ENCODE measurements at regions of chr20 and their contacts with region 1.

Region 1: GRCh38 chr20:47610247-47610944 is 108.7 kb downstream of the NCOA3 start:
- DNase-seq: peak; percentile 93
- H3K4me3 ChIP-seq: no peak overlapping the region
- H3K27ac ChIP-seq: peak overlapping the region; percentile 95
- H3K4me1 ChIP-seq: peaks cover 37% of the 10 kb centered on the region
- H3K27me3 ChIP-seq: no peaks in the 10 kb centered on the region
- CTCF ChIP-seq: no peak
- POLR2A ChIP-seq: no peak

Region 2: DNA sequence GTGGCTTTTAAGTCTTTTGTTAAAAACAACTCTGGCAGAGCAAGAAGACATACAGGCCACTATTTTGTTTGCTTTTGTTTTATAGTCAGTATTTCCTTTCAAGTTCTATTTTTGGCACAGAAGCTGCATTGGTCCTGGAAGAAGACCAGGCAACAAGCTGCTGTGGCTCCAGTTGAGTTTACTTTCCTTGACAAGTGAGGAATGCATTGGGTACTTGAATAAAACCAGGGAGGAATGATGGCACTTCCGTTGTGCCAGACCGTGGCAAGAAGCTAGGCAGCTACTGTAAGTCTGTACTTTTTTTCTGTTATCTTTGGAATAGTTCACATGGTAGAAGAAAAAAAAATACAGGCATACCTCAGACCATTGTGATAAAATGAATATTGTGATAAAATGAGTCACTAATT is 42.4 kb before region 1 on chr20:
- CTCF ChIA-PET with region 1: no interaction called
- POLR2A ChIA-PET with region 1: no interaction called
- dilution Hi-C with region 1: no loop called
- intact Hi-C with region 1: loop called (anchors 1 kb)
- DNase-seq: peak; percentile 93
- H3K4me3 ChIP-seq: no peak overlapping the region
- H3K27ac ChIP-seq: peak overlapping the region; percentile 42
- H3K4me1 ChIP-seq: peaks cover 16% of the 10 kb centered on the region
- H3K27me3 ChIP-seq: no peaks in the 10 kb centered on the region
- CTCF ChIP-seq: no peak
- POLR2A ChIP-seq: no peak

Region 3: DNA sequence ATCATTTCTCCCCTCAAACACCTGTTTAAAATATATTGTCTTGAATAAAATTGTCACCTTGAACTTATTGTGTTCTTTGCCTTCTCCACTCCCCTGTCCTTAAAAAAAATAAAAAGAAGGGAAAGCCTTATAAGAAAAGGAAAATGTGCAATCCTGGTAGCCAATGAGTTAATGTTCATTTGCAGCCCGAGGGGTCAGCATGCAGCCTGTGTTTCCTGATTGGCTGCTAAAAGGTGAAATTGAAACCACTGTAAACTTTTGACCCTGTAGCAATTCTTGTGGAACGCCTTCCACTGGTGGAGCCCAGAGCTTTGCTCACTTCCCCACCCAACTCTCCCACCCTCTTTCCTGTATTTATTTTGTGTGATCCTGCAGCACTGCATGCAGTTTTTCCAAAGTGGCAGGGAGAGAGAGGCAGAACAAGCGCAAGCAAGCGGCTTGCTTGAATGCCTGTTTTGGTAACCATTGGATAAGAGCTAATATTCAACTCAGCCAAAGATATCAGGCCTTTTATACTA is 33.8 kb before region 1 on chr20:
- CTCF ChIA-PET with region 1: interaction called, 21 read pairs
- POLR2A ChIA-PET with region 1: no interaction called
- dilution Hi-C with region 1: no loop called
- intact Hi-C with region 1: loop called (anchors 2 kb)
- DNase-seq: peak; percentile 95
- H3K4me3 ChIP-seq: peak overlapping the region in 1 of 3 experiments; percentile 58
- H3K27ac ChIP-seq: peak overlapping the region; percentile 55
- H3K4me1 ChIP-seq: peaks cover 60% of the 10 kb centered on the region
- H3K27me3 ChIP-seq: no peaks in the 10 kb centered on the region
- CTCF ChIP-seq: no peak
- POLR2A ChIP-seq: peak; percentile 80

Measured in endothelial cell of umbilical vein (primary cell).